Activated CD4-positive, alpha-beta memory T cell treated with anti-CD3 and anti-CD28 coated beads, Interleukin-2, amount 10 ng/mL, durations not matched to agents 7 days and 5 days (primary cell): ENCODE measurements at regions of chr1 and their contacts with region 1.

Region 1: GRCh38 chr1:212284744-212285684 is at the start of gene PPP2R5A:
- DNase-seq: peak; percentile 99
- H3K4me3 Mint-ChIP-seq: peak within 1 kb of the TSS; percentile 94
- H3K27ac Mint-ChIP-seq: peak within 1 kb of the TSS; percentile 98
- H3K4me1 Mint-ChIP-seq: peaks cover 40% of the 10 kb centered on the region
- H3K27me3 Mint-ChIP-seq: peaks cover 6% of the 10 kb centered on the region
- total RNA-seq, gene PPP2R5A: 65.9 to 67.0 TPM

Region 2: DNA sequence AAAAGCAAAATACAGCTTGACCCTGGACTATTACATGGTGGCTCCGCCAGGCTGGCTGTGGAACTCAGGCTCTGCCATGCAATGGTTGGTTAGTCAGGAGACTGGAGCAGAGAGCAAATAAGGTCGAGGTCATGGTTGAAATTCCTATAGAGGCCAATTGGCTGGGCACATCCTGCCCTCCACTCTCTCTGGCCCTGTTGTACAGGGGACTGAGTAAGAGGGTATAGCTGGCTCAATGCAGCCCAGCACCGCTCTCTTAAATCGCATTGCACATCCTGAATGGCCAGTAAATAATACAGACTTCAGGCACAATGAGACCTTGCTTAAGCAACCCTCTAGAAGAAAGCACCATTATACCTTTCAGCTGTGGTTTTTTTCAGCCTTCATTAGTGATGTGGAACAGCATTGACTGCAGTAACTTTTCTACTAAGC is 59.1 kb before region 1 on chr1:
- CTCF ChIA-PET with region 1: no interaction called
- POLR2A ChIA-PET with region 1: interaction called, 14 read pairs
- DNase-seq: no peak
- H3K4me3 Mint-ChIP-seq: no peak overlapping the region
- H3K27ac Mint-ChIP-seq: peak overlapping the region; percentile 87
- H3K4me1 Mint-ChIP-seq: peaks cover 31% of the 10 kb centered on the region
- H3K27me3 Mint-ChIP-seq: peaks cover 8% of the 10 kb centered on the region

Region 3: GRCh38 chr1:212256369-212256768 is 28.6 kb before region 1 on chr1:
- CTCF ChIA-PET with region 1: interaction called, 6 read pairs
- POLR2A ChIA-PET with region 1: interaction called, 101 read pairs
- DNase-seq: peak; percentile 76
- H3K4me3 Mint-ChIP-seq: no peak overlapping the region
- H3K27ac Mint-ChIP-seq: peak overlapping the region; percentile 93
- H3K4me1 Mint-ChIP-seq: peaks cover 75% of the 10 kb centered on the region
- H3K27me3 Mint-ChIP-seq: peaks cover 1% of the 10 kb centered on the region

Region 4: GRCh38 chr1:212269306-212269705 is 15.7 kb before region 1 on chr1:
- CTCF ChIA-PET with region 1: interaction called, 10 read pairs
- POLR2A ChIA-PET with region 1: interaction called, 9 read pairs
- DNase-seq: no peak
- H3K4me3 Mint-ChIP-seq: no peak overlapping the region
- H3K27ac Mint-ChIP-seq: no peak overlapping the region
- H3K4me1 Mint-ChIP-seq: peaks cover 1% of the 10 kb centered on the region
- H3K27me3 Mint-ChIP-seq: peaks cover 19% of the 10 kb centered on the region